GM12878 (cell line): ENCODE measurements at regions of chr17 and their contacts with region 1.

Region 1: GRCh38 chr17:50297407-50297865 is 23.2 kb downstream of the TMEM92 start:
- DNase-seq: no peak
- ATAC-seq: peak; percentile 99
- H3K4me3 ChIP-seq: no peak overlapping the region
- H3K27ac ChIP-seq: no peak overlapping the region
- H3K4me1 ChIP-seq: no peaks in the 10 kb centered on the region
- H3K27me3 ChIP-seq: no peaks in the 10 kb centered on the region
- CTCF ChIP-seq: peak; percentile 94 to 98 (median 97); a peak in 5 of 6 replicates
- EP300 ChIP-seq: no peak
- POLR2A ChIP-seq: no peak
- RAD21 ChIP-seq: peak; percentile 100

Region 2: DNA sequence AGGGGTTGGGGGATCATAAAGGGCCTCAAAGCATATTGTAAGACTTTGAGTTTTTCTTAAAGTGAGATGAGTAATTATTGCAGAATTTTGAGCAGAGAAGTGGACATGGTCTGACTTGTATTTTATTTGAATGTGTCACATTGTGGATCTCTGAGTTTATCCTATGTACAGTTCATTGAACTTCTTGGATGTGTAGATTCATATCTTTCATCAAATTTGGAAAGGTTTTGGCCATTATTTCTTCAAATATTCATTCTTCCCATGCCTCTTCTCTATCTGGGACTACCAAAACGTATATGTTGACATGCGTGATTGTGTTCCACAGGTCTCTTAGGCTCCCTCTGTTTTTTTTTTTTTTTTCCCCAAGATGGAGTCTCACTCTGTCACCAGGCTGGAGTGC is 288.2 kb before region 1 on chr17:
- CTCF ChIA-PET with region 1: interaction called, 3 read pairs
- POLR2A ChIA-PET with region 1: no interaction called
- RAD21 ChIA-PET with region 1: no interaction called
- SMC1A ChIA-PET with region 1: no interaction called
- in situ Hi-C with region 1: no loop called
- intact Hi-C with region 1: loop called (anchors 5 kb)
- DNase-seq: no peak
- ATAC-seq: no peak
- H3K4me3 ChIP-seq: no peak overlapping the region
- H3K27ac ChIP-seq: no peak overlapping the region
- H3K4me1 ChIP-seq: peaks cover 7% of the 10 kb centered on the region
- H3K27me3 ChIP-seq: no peaks in the 10 kb centered on the region
- CTCF ChIP-seq: no peak
- EP300 ChIP-seq: no peak
- POLR2A ChIP-seq: no peak
- RAD21 ChIP-seq: no peak

Region 3: GRCh38 chr17:50177983-50178834 is 119.2 kb before region 1 on chr17:
- CTCF ChIA-PET with region 1: interaction called, 10 read pairs
- POLR2A ChIA-PET with region 1: no interaction called
- RAD21 ChIA-PET with region 1: no interaction called
- SMC1A ChIA-PET with region 1: interaction called, 4 read pairs
- in situ Hi-C with region 1: no loop called
- intact Hi-C with region 1: no loop called
- DNase-seq: no peak
- ATAC-seq: peak; percentile 96
- H3K4me3 ChIP-seq: no peak overlapping the region
- H3K27ac ChIP-seq: no peak overlapping the region
- H3K4me1 ChIP-seq: peaks cover 4% of the 10 kb centered on the region
- H3K27me3 ChIP-seq: no peaks in the 10 kb centered on the region
- CTCF ChIP-seq: peak; percentile 61 to 69 (median 65)
- EP300 ChIP-seq: no peak
- POLR2A ChIP-seq: no peak
- RAD21 ChIP-seq: 0 out of 2 replicates have a peak, but pooled peaks have one; percentile 38

Region 4: GRCh38 chr17:50213026-50214022 is 84.1 kb before region 1 on chr17:
- CTCF ChIA-PET with region 1: interaction called, 36 read pairs
- POLR2A ChIA-PET with region 1: interaction called, 3 read pairs
- RAD21 ChIA-PET with region 1: interaction called, 18 read pairs
- SMC1A ChIA-PET with region 1: interaction called, 11 read pairs
- in situ Hi-C with region 1: no loop called
- intact Hi-C with region 1: no loop called
- DNase-seq: peak; percentile 43
- ATAC-seq: peak; percentile 98
- H3K4me3 ChIP-seq: no peak overlapping the region
- H3K27ac ChIP-seq: no peak overlapping the region
- H3K4me1 ChIP-seq: peaks cover 12% of the 10 kb centered on the region
- H3K27me3 ChIP-seq: 0 out of 4 replicates have a peak, but pooled peaks cover 0 to 3% of the 10 kb centered on the region in 2 experiments
- CTCF ChIP-seq: peak in 2 of 3 experiments; percentile 14 to 20; a peak in 1 of 6 replicates
- EP300 ChIP-seq: peak in 1 of 2 experiments; percentile 53; a peak in 1 of 4 replicates
- POLR2A ChIP-seq: no peak
- RAD21 ChIP-seq: no peak

Region 5: GRCh38 chr17:50279181-50279526 is 18.3 kb before region 1 on chr17:
- CTCF ChIA-PET with region 1: interaction called, 298 read pairs
- POLR2A ChIA-PET with region 1: interaction called, 5 read pairs
- RAD21 ChIA-PET with region 1: interaction called, 17 read pairs
- SMC1A ChIA-PET with region 1: interaction called, 87 read pairs
- in situ Hi-C with region 1: no loop called
- intact Hi-C with region 1: no loop called
- DNase-seq: no peak
- ATAC-seq: no peak
- H3K4me3 ChIP-seq: no peak overlapping the region
- H3K27ac ChIP-seq: no peak overlapping the region
- H3K4me1 ChIP-seq: peaks cover 32% of the 10 kb centered on the region
- H3K27me3 ChIP-seq: peaks cover 0 to 1% of the 10 kb centered on the region in 2 experiments; a peak in 3 of 4 replicates
- CTCF ChIP-seq: no peak
- EP300 ChIP-seq: no peak
- POLR2A ChIP-seq: no peak
- RAD21 ChIP-seq: no peak

Region 6: GRCh38 chr17:50318501-50319285 is 21.3 kb after region 1 on chr17:
- CTCF ChIA-PET with region 1: interaction called, 11 read pairs
- POLR2A ChIA-PET with region 1: no interaction called
- RAD21 ChIA-PET with region 1: interaction called, 3 read pairs
- SMC1A ChIA-PET with region 1: interaction called, 12 read pairs
- in situ Hi-C with region 1: no loop called
- intact Hi-C with region 1: no loop called
- DNase-seq: no peak
- ATAC-seq: no peak
- H3K4me3 ChIP-seq: no peak overlapping the region
- H3K27ac ChIP-seq: no peak overlapping the region
- H3K4me1 ChIP-seq: peaks cover 4% of the 10 kb centered on the region; the same call in 1 of the 2 replicates
- H3K27me3 ChIP-seq: no peaks in the 10 kb centered on the region
- CTCF ChIP-seq: no peak
- EP300 ChIP-seq: no peak
- POLR2A ChIP-seq: no peak
- RAD21 ChIP-seq: no peak

Region 7: DNA sequence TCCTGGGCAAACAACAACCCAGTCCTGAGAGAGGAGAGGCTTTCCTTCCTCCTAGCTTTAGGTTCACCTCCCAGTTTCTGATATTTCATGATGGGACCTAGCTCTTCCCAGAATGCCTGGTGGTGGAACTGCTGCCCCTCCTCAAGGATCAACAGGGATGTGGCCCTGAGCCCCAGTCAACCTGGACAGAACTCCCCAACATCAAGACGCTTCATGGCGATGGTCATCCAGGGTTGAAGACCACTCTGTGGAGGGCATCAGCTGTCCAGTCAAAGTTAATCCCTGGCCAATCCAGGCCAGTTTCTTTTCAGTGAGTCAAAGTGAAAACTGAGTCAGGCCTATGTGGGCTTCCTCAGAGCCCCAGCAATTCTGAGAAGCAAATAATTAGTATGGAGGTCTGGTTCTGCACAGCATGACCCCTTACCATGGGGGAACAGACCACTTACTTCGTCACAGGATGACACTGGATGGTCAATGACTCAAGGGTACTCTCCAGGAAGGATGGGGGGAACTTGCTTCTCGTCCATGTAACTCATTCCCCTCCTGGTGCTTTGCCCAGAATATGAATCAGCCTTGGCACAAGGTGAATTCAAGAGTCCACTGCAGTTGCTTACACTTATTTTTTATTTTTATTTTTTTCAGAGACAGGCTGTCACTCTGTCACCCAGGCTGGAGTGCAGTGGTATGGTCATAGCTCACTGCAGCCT is 33.8 kb after region 1 on chr17:
- CTCF ChIA-PET with region 1: interaction called, 13 read pairs
- POLR2A ChIA-PET with region 1: interaction called, 7 read pairs
- RAD21 ChIA-PET with region 1: interaction called, 16 read pairs
- SMC1A ChIA-PET with region 1: interaction called, 7 read pairs
- in situ Hi-C with region 1: no loop called
- intact Hi-C with region 1: no loop called
- DNase-seq: no peak
- ATAC-seq: peak; percentile 65
- H3K4me3 ChIP-seq: no peak overlapping the region
- H3K27ac ChIP-seq: no peak overlapping the region
- H3K4me1 ChIP-seq: peaks cover 3% of the 10 kb centered on the region
- H3K27me3 ChIP-seq: no peaks in the 10 kb centered on the region
- CTCF ChIP-seq: no peak
- EP300 ChIP-seq: no peak
- POLR2A ChIP-seq: no peak
- RAD21 ChIP-seq: no peak